HEK293 (cell line): ENCODE measurements at regions of chr7 and their contacts with region 1.

Region 1: DNA sequence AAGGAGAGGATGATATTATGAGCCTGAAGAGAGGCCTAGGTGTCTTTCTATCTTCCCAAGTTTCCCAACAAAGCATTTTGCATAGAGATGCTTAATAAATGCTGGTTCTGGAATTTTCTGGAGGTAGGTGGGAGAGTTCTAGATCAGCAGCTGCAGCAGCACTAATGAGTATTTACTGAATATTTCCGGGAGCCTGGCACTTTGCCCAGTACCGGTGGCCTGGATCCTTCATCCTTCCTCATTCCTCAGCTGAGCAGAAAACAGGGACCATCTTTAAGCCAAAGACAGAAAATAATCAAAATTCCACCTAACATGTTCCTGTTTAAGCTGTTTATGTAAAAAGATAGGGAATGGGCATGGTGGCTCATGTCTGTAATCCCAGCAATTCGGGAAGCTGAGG is 813.2 kb upstream of the AUTS2 start:
- H3K4me3 ChIP-seq: no peak overlapping the region
- H3K27ac ChIP-seq: no peak overlapping the region
- H3K4me1 ChIP-seq: no peaks in the 10 kb centered on the region
- CTCF ChIP-seq: no peak

Region 2: GRCh38 chr7:68800316-68800715 is 15.3 kb after region 1 on chr7:
- CTCF ChIA-PET with region 1: interaction called, 3 read pairs
- POLR2A ChIA-PET with region 1: interaction called, 10 read pairs
- H3K4me3 ChIP-seq: no peak overlapping the region
- H3K27ac ChIP-seq: no peak overlapping the region
- H3K4me1 ChIP-seq: no peaks in the 10 kb centered on the region
- CTCF ChIP-seq: no peak